ENCODE measurements at regions of chr3 and their contacts with region 1.

Region 1: DNA sequence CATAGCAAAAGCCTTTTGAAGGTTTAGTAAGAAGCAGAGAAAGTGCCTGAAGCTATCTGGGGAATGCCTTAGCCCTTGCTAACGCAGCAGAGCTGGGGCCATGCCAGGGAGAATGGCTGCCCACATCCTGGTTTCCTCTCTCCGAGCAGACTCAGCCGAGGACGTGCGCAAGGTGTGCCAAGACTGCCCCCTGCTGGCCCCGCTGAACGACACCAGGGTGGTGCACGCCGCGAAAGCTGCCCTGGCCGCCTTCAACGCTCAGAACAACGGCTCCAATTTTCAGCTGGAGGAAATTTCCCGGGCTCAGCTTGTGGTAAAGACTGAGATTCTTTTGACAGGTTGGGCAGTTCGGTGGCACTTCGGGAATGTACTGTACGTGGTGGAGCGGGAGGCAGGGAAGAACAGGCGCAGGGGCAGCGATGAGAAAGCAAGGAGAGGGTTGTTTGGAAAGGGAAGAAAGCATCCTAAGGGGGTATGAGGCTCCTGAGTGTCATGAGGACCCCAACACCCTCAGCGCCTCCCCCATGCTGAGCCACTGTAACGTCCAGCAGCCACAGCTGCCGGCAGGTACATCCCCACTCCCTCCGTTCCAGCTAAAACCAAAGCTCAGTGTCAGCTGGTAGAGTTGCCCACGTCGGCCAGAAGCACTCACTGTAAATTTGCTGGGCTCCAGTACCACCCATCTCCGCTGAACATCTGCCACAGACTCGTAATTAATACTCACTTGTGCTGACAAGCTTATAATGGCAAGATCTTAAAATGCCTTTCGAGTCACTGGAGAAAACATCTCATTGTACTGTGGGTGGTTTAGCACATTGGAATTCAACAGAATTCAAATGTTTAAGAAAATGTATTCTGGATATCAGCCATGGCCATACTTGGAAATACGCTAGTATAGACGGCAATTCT is 4.4 kb downstream of the AHSG start:
- DNase-seq: peak; percentile 86 to 90 (median 87)
- ATAC-seq: peak; percentile 99
- H3K4me3 ChIP-seq: no peak overlapping the region
- H3K4me1 ChIP-seq: peaks cover 5% of the 10 kb centered on the region
- CTCF ChIP-seq: peak; percentile 88

Region 2: GRCh38 chr3:186759231-186759930 is 142.1 kb after region 1 on chr3:
- intact Hi-C with region 1: loop called in 1 of 2 experiments (anchors 10 kb)
- DNase-seq: no peak
- ATAC-seq: no peak
- H3K4me3 ChIP-seq: no peak overlapping the region
- H3K4me1 ChIP-seq: no peaks in the 10 kb centered on the region
- CTCF ChIP-seq: no peak

Region 3: DNA sequence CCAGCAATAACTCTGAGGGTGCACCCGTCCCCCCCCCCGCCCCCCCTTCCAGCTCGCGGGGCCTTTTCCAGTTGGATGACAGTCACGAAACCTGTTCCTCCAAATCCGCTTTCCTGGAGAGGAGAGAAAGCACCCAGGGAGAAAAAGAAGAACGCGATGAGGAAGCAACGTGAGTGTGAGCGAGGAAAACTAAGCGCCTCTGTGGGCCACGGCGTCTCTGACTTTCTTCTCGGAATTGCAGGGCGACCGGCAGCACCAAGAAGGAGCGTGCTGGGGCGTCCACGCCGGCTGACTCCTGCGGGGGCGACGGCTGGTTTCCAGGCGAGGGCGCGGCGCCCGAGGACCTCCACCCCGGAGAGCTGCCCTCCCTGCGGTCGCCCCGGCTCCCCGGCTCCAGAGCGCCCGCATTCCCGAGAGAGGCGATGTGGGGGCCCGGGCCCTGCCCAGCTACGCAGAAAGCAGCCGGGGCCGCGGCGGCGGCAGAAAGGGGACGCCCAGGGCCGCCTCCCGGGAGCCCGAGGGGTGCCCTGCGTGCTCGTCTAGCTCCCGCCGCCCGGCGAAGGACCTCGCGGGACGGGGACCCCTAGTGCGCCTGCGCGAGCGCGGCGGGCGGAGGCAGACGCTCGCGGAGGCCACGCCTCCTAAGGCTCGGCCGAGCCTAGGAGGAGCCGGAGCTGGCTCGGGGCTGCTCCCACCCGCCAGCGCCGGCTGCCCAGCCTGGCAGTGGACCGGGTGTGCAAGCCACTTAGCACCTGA is 209.9 kb after region 1 on chr3:
- intact Hi-C with region 1: loop called (anchors 5 to 10 kb)
- DNase-seq: peak; percentile 78 to 88 (median 85)
- ATAC-seq: peak; percentile 98
- H3K4me3 ChIP-seq: peak overlapping the region; percentile 9
- H3K4me1 ChIP-seq: peaks cover 14% of the 10 kb centered on the region
- CTCF ChIP-seq: no peak

Measured in mucosa of descending colon (tissue), 3 donors.